Caco-2 (cell line): ENCODE measurements at regions of chr22 and their contacts with region 1.

Region 1: DNA sequence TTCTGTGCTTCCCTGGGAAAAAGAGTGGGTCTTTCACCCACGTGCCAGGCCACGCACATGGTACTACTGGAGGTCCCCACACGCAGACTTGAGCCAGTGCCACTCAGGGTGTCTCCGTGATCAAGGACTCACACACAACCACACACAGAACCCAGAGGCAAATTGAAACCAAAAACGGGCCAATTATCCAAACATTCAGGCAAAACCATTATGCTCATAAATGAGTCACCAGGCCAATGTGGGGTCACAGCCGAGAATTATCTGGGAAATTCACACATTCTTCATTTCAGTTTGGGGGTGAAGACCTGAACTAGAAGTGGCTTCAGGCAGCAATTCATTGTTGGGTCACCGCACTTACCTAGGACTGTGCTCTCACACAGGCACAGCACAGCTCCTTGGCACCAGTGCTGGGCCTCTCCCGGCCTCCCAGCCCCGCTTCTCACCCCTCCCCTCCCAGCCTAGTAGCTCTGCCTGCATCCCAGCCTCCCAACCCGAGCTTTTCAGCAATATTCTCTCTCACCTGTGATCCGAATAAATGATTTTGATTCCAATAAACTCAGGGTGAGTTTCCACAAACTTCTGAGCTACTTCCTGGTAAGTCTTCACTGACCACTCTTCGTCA is 28.0 kb downstream of the ADA2 start:
- DNase-seq: no peak
- H3K4me3 ChIP-seq: no peak overlapping the region
- H3K4me3 Mint-ChIP-seq: no peak overlapping the region
- H3K27ac Mint-ChIP-seq: no peak overlapping the region
- H3K4me1 ChIP-seq: no peaks in the 10 kb centered on the region
- H3K4me1 Mint-ChIP-seq: no peaks in the 10 kb centered on the region
- H3K27me3 ChIP-seq: no peaks in the 10 kb centered on the region
- H3K27me3 Mint-ChIP-seq: peaks cover 2% of the 10 kb centered on the region
- CTCF ChIP-seq: no peak

Region 2: DNA sequence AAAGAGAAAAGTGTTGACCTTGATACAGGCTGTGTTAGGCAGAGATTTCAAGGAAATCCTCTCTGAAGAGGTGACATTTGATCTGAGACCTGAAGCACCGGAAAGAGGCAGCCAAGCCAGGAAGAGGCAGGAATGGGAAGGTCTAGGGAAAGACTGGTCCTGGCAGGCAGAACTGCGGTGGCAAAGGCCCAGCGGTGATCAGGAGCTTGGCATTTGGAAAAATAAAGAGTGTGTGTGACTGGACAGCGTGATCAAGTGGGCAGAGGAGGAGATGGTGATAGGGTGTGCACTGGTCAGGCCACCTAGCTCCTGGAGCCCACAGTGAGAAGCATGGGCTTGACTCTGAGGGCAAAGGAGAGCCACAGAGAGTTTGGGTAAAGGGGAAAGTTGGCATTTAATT is 156.0 kb before region 1 on chr22:
- CTCF ChIA-PET with region 1: no interaction called
- POLR2A ChIA-PET with region 1: no interaction called
- intact Hi-C with region 1: no loop called
- DNase-seq: no peak
- H3K4me3 ChIP-seq: no peak overlapping the region
- H3K4me3 Mint-ChIP-seq: no peak overlapping the region
- H3K27ac Mint-ChIP-seq: no peak overlapping the region
- H3K4me1 ChIP-seq: no peaks in the 10 kb centered on the region
- H3K4me1 Mint-ChIP-seq: no peaks in the 10 kb centered on the region
- H3K27me3 ChIP-seq: no peaks in the 10 kb centered on the region
- H3K27me3 Mint-ChIP-seq: no peaks in the 10 kb centered on the region
- CTCF ChIP-seq: no peak

Region 3: DNA sequence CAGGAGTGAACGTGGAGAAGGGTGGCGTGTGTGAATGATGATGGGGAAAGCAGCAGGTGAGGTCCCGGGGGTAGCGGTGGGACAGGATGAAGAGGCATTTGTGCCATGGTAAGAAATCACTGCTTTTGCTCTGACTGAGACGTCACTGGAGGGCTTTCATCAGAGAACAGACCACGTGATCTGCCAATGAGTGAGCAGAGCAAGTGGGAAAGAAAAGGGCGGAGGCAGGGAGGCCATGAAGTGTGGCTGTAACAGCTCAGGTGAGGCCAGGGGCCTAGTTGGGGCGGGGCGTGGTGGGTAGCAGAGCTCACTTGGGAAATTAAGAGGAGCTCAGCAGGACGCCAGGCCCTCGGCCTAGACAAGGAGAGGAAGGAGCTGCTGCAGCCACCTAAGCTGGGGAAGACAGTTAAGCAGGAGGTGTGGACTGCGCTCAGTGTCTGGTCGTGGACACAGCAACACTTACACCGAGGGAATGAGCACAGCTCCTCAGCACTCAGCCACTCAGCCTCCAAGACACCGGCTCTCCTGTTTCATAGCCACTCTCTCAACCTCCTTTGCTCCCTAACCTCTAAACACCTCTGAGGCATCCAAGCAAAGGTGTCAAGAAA is 56.0 kb before region 1 on chr22:
- CTCF ChIA-PET with region 1: interaction called, 10 read pairs
- POLR2A ChIA-PET with region 1: no interaction called
- intact Hi-C with region 1: no loop called
- DNase-seq: peak in 1 of 2 experiments; percentile 19
- H3K4me3 ChIP-seq: no peak overlapping the region
- H3K4me3 Mint-ChIP-seq: no peak overlapping the region
- H3K27ac Mint-ChIP-seq: no peak overlapping the region
- H3K4me1 ChIP-seq: no peaks in the 10 kb centered on the region
- H3K4me1 Mint-ChIP-seq: no peaks in the 10 kb centered on the region
- H3K27me3 ChIP-seq: no peaks in the 10 kb centered on the region
- H3K27me3 Mint-ChIP-seq: no peaks in the 10 kb centered on the region
- CTCF ChIP-seq: no peak

Region 4: GRCh38 chr22:17234144-17234623 is 42.9 kb after region 1 on chr22:
- CTCF ChIA-PET with region 1: no interaction called
- POLR2A ChIA-PET with region 1: no interaction called
- intact Hi-C with region 1: no loop called
- DNase-seq: no peak
- H3K4me3 ChIP-seq: no peak overlapping the region
- H3K4me3 Mint-ChIP-seq: no peak overlapping the region
- H3K27ac Mint-ChIP-seq: no peak overlapping the region
- H3K4me1 ChIP-seq: no peaks in the 10 kb centered on the region
- H3K4me1 Mint-ChIP-seq: no peaks in the 10 kb centered on the region
- H3K27me3 ChIP-seq: no peaks in the 10 kb centered on the region
- H3K27me3 Mint-ChIP-seq: no peaks in the 10 kb centered on the region
- CTCF ChIP-seq: no peak